ENCODE measurements at regions of chr20 and their contacts with region 1.

Region 1: DNA sequence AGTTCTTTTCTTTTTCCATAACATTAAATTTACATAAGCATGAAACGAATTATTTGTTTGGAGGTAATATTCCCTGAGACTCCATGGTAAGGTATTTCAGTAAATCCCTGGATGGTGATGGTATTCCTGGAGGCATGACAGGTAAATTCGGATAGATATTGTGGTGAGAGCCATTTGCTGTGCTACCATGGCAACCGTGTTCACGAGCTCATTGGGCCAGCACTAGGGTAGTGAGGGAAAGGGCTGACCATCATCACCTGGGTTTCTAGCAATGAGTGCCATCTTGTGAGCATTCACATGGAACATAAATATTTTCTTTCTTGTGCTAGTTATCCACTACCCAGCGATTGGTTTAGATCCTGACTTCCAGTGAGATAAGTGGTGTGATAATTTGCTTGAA is 51.9 kb upstream of the GNRH2 start:
- DNase-seq: no peak
- ATAC-seq: no peak
- H3K4me3 ChIP-seq: no peak overlapping the region
- H3K27ac ChIP-seq: no peak overlapping the region
- H3K4me1 ChIP-seq: no peaks in the 10 kb centered on the region
- H3K27me3 ChIP-seq: no peaks in the 10 kb centered on the region
- CTCF ChIP-seq: no peak
- POLR2A ChIP-seq: no peak
- RAD21 ChIP-seq: no peak

Region 2: DNA sequence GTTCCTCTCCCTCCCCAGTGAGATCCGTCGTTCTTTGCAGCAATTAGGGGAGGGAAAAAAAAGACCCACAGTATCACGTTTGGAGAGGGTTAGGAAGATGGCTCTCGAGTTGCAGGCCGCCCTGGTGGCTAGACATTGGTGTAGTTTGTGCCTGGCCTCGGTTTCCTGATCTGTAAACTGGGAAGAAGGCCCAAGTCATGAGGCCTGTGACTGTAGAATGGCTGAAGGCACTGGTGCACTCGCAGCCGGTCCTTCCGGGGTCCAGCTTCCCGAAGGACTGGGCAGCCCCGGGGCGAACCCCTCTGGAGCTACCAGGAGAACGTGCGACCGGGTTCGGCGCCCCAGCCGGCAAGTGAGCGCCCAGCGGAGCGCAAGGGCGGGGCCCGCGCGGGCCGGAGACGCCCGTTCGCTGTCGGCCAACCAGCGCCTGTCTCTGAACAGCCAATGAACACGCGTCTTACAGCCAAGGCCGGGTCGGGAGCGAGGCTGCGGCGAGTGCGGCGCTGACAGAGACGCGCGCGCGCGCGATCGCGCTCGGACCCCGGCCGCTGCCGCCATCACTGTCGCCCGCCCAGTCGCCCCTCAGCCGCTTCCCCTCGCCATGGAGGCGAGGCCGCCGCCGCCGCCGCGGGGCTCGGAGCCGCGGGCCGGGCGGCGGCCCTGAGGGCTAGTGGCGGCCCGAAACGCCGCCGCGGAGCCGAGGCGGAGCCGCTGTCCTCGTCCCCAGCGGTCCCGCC is 118.4 kb before region 1 on chr20 and contains the start of gene PTPRA:
- CTCF ChIA-PET with region 1: interaction called, 3 read pairs
- POLR2A ChIA-PET with region 1: no interaction called
- dilution Hi-C with region 1: no loop called
- in situ Hi-C with region 1: loop called (anchors 10 kb)
- intact Hi-C with region 1: no loop called
- DNase-seq: peak; percentile 88
- ATAC-seq: peak; percentile 95
- H3K4me3 ChIP-seq: peak within 1 kb of the TSS; percentile 97
- H3K27ac ChIP-seq: peak within 1 kb of the TSS; percentile 45
- H3K4me1 ChIP-seq: peaks cover 14% of the 10 kb centered on the region
- H3K27me3 ChIP-seq: no peaks in the 10 kb centered on the region
- CTCF ChIP-seq: no peak
- POLR2A ChIP-seq: peak; percentile 80
- RAD21 ChIP-seq: no peak
- total RNA-seq, gene PTPRA: 44.4 and 50.0 TPM in 2 replicates

Measured in IMR-90 (cell line).